ENCODE measurements at regions of chr2 and their contacts with region 1.

Region 1: DNA sequence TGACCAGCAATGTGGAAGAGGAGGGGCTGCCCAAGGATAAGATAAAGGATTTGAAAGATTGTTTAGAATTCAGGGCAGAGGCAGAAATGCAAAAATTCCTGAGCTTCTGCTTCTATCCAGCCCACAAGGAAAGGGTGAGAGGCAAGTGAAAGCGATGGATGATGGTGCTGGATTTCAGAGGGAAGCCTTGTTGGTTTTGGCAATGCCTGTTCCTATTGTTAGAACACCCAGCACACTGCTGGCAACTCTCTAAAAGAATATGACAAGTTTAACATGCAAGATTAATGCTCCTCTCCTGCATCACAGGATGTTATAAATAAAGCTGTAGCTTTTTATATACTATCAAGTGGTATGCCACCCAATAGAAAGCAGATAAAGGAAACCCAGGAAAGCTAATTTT is 92.6 kb downstream of the ZNF385B start:
- DNase-seq: no peak
- H3K4me3 ChIP-seq: no peak overlapping the region
- H3K27ac ChIP-seq: no peak overlapping the region
- H3K4me1 ChIP-seq: no peaks in the 10 kb centered on the region
- H3K27me3 ChIP-seq: no peaks in the 10 kb centered on the region
- CTCF ChIP-seq: no peak
- EP300 ChIP-seq: no peak
- POLR2A ChIP-seq: no peak

Region 2: GRCh38 chr2:178568227-178568626 is 1200.5 kb before region 1 on chr2:
- intact Hi-C with region 1: loop called in 1 of 4 experiments (anchors 10 kb)
- DNase-seq: no peak
- H3K4me3 ChIP-seq: no peak overlapping the region
- H3K27ac ChIP-seq: no peak overlapping the region
- H3K4me1 ChIP-seq: no peaks in the 10 kb centered on the region
- H3K27me3 ChIP-seq: no peaks in the 10 kb centered on the region
- CTCF ChIP-seq: no peak
- EP300 ChIP-seq: no peak
- POLR2A ChIP-seq: no peak

Region 3: GRCh38 chr2:179726461-179727180 is 42.1 kb before region 1 on chr2:
- intact Hi-C with region 1: no loop called
- DNase-seq: no peak
- H3K4me3 ChIP-seq: no peak overlapping the region
- H3K27ac ChIP-seq: no peak overlapping the region
- H3K4me1 ChIP-seq: no peaks in the 10 kb centered on the region
- H3K27me3 ChIP-seq: no peaks in the 10 kb centered on the region
- CTCF ChIP-seq: no peak
- EP300 ChIP-seq: no peak
- POLR2A ChIP-seq: no peak

Measured in ovary (tissue), 10 donors.